Activated CD4-positive, alpha-beta T cell treated with anti-CD3 and anti-CD28 coated beads for 36 hours (primary cell): ENCODE measurements at regions of chrX and their contacts with region 1.

Region 1: DNA sequence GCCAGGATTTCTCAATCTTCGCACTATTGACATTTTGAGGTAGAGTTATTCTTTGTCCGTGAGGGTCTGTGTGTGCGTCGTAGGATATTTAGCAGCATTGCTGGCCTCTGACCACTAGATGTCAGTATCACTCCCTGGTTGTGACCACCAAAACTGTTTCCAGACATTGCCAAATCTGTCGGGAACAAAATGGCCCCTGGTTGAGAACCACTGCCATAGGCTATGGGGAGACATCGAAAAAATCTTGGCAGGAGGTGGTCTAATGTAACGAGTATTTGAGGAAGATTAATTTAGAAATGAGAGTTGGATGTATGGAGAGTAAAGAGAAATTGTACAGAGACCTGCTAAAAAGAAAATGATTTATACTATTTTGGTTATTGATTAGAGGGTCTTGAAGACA is 108.4 kb downstream of the DOCK11 start:
- DNase-seq: peak; percentile 38
- ATAC-seq: peak; percentile 64
- H3K4me3 Mint-ChIP-seq: no peak overlapping the region
- H3K27ac Mint-ChIP-seq: no peak overlapping the region
- H3K4me1 Mint-ChIP-seq: peaks cover 17% of the 10 kb centered on the region
- H3K27me3 Mint-ChIP-seq: no peaks in the 10 kb centered on the region

Region 2: GRCh38 chrX:118459494-118459893 is 144.5 kb before region 1 on chrX:
- CTCF ChIA-PET with region 1: interaction called, 55 read pairs
- POLR2A ChIA-PET with region 1: interaction called, 3 read pairs
- intact Hi-C with region 1: loop called (anchors 1 kb)
- DNase-seq: peak; percentile 34
- ATAC-seq: peak; percentile 66
- H3K4me3 Mint-ChIP-seq: no peak overlapping the region
- H3K27ac Mint-ChIP-seq: no peak overlapping the region
- H3K4me1 Mint-ChIP-seq: no peaks in the 10 kb centered on the region
- H3K27me3 Mint-ChIP-seq: no peaks in the 10 kb centered on the region

Region 3: GRCh38 chrX:118637997-118638396 is 34.0 kb after region 1 on chrX:
- CTCF ChIA-PET with region 1: no interaction called
- POLR2A ChIA-PET with region 1: no interaction called
- intact Hi-C with region 1: no loop called
- DNase-seq: no peak
- ATAC-seq: no peak
- H3K4me3 Mint-ChIP-seq: no peak overlapping the region
- H3K27ac Mint-ChIP-seq: no peak overlapping the region
- H3K4me1 Mint-ChIP-seq: peaks cover 3% of the 10 kb centered on the region
- H3K27me3 Mint-ChIP-seq: no peaks in the 10 kb centered on the region

Region 4: DNA sequence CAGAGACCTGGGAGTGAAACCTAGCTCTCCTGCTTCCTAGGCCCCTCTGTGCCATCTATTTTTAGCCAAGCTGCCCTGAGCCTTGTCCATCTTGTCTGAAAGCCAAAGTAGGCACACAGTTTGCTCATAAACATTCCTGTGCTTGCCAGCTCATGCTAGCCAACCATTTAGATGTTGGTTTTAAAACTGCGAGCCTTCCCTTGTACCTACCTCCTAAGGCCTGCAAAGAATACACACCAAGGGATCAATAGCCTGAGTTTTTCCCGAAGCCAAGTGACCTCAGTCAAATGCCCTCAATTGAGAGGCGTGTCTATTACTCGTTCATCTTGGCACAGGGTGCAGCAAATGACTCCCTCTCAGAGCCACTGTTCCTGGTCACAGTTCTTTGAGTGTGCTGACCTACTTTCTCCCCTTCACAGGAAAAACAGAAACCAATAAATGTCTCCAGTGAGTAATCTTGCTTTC is 268.2 kb after region 1 on chrX:
- CTCF ChIA-PET with region 1: no interaction called
- POLR2A ChIA-PET with region 1: no interaction called
- intact Hi-C with region 1: no loop called
- DNase-seq: no peak
- ATAC-seq: peak; percentile 47
- H3K4me3 Mint-ChIP-seq: no peak overlapping the region
- H3K27ac Mint-ChIP-seq: no peak overlapping the region
- H3K4me1 Mint-ChIP-seq: no peaks in the 10 kb centered on the region
- H3K27me3 Mint-ChIP-seq: no peaks in the 10 kb centered on the region